Natural killer cell (primary cell): ENCODE measurements at regions of chr22 and their contacts with region 1.

Region 1: GRCh38 chr22:26642465-26643417 is 14.6 kb upstream of the MIAT start:
- DNase-seq: peak; percentile 72 to 83
- ATAC-seq: peak; percentile 75 to 80 (median 80)
- H3K4me3 ChIP-seq: no peak overlapping the region
- H3K4me3 Mint-ChIP-seq: peak overlapping the region; percentile 91
- H3K27ac ChIP-seq: peak overlapping the region; percentile 87
- H3K27ac Mint-ChIP-seq: peak overlapping the region; percentile 94 to 99
- H3K4me1 ChIP-seq: peaks cover 56% of the 10 kb centered on the region
- H3K4me1 Mint-ChIP-seq: peaks cover 75 to 76% of the 10 kb centered on the region in 2 donors
- H3K27me3 ChIP-seq: no peaks in the 10 kb centered on the region
- H3K27me3 Mint-ChIP-seq: no peaks in the 10 kb centered on the region
- CTCF ChIP-seq: peak; percentile 23

Region 2: GRCh38 chr22:26658671-26659478 is 16.1 kb after region 1 on chr22:
- intact Hi-C with region 1: loop called (anchors 2 kb)
- DNase-seq: peak; percentile 58 to 81
- ATAC-seq: peak; percentile 67 to 68 (median 68)
- H3K4me3 ChIP-seq: peak overlapping the region; percentile 34
- H3K4me3 Mint-ChIP-seq: peak overlapping the region; percentile 82
- H3K27ac ChIP-seq: no peak overlapping the region
- H3K27ac Mint-ChIP-seq: peak overlapping the region; percentile 77 to 88
- H3K4me1 ChIP-seq: peaks cover 29% of the 10 kb centered on the region
- H3K4me1 Mint-ChIP-seq: peaks cover 22 to 33% of the 10 kb centered on the region in 2 donors
- H3K27me3 ChIP-seq: peaks cover 6% of the 10 kb centered on the region
- H3K27me3 Mint-ChIP-seq: peaks cover 0 to 8% of the 10 kb centered on the region in 2 donors
- CTCF ChIP-seq: no peak

Region 3: GRCh38 chr22:26672590-26673468 is 30.1 kb after region 1 on chr22:
- intact Hi-C with region 1: loop called (anchors 1 kb)
- DNase-seq: peak; percentile 87 to 97
- ATAC-seq: peak; percentile 60 to 87 (median 77)
- H3K4me3 ChIP-seq: peak overlapping the region; percentile 65
- H3K4me3 Mint-ChIP-seq: peak overlapping the region; percentile 96
- H3K27ac ChIP-seq: peak overlapping the region; percentile 91
- H3K27ac Mint-ChIP-seq: peak overlapping the region; percentile 95 to 99
- H3K4me1 ChIP-seq: peaks cover 86% of the 10 kb centered on the region
- H3K4me1 Mint-ChIP-seq: peaks cover 80 to 88% of the 10 kb centered on the region in 2 donors
- H3K27me3 ChIP-seq: no peaks in the 10 kb centered on the region
- H3K27me3 Mint-ChIP-seq: no peaks in the 10 kb centered on the region
- CTCF ChIP-seq: no peak